ENCODE measurements at regions of chr3 and their contacts with region 1.

Region 1: DNA sequence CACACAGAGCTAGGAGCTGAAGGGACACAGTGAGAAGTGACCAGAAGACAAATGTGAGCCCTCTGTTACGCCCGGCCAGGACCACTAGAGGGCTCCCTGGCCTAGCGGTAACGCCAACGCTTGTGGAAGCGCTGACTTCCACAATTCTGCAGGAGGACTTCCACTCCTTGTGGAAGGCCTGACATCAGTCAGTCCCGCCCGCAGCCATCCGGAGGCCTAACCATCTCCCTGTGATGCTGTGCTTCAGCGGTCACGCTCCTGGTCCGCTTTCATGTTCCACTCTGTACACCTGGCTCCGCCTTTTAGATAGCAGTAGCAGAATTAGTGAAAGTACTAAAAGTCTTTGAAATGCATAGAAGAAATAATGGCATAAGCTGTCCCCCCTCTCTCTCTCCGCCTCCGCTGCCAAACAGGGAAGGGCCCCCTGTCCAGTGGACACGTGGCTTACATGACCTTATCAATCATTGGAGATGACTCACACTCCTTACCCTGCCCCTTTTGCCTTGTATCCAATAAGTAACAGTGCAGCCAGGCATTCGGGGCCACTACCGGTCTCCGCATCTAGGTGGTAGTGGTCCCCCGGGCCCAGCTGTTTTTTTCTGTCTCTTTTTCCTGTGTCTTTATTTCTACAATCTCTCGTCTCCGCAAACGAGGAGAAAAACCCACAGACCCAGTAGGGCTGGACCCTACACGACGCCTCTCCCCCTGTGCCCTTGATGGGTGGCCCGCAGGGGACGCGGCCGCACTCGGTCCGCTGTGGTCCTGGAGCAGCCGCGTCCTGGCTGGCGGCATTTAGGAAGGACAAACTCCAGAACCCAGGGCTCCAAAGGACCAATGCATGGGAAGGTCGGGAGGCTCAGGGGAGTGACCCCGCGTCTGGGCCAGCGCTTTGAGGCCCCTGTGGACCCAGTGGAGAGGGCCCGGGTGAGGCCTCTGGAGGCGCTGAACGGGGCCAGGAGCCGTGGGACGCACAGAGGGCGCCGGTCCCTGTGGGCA is 27.0 kb upstream of the RPL32 start:
- DNase-seq: peak; percentile 91
- ATAC-seq: peak; percentile 95

Region 2: GRCh38 chr3:12545300-12545791 is 323.0 kb before region 1 on chr3 and contains the start of gene MKRN2OS:
- intact Hi-C with region 1: no loop called
- DNase-seq: no peak
- ATAC-seq: no peak
- total RNA-seq, gene MKRN2OS: not detected

Region 3: GRCh38 chr3:12891985-12892839 is 23.9 kb after region 1 on chr3:
- intact Hi-C with region 1: loop called (anchors 1 kb)
- DNase-seq: peak; percentile 48
- ATAC-seq: peak; percentile 53

Measured in Right ventricle myocardium inferior (tissue), 1 donor.